Activated naive CD4-positive, alpha-beta T cell treated with anti-CD3 and anti-CD28 coated beads for 36 hours (primary cell): ENCODE measurements at regions of chr3 and their contacts with region 1.

Region 1: DNA sequence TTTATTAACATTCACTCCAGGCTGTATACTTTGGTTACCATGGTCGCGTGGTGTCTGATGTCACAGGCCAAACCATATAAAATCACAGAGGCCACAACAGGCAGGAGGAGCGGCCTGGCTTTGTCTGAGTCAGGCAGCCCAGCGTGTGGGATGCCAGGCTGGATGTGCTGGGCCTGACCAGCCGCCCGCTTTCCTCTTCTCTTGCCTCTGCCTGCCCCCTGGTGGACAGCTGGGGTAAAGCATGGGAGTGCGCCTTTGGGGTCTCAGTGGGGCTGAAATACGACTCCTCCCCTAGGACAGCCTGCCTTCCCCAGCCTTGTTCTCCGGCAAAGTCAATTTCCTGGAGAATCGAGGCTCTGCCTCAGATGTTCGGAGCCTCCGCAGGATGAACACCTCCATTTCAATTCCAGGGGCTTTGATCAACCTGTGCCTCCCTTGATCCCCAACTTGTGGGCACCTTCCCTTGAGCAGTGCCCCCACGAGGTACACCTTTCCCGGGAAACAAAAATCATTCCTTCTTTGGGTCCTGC is 78.2 kb downstream of the CCNL1 start:
- DNase-seq: peak; percentile 86
- H3K4me3 Mint-ChIP-seq: no peak overlapping the region
- H3K27ac Mint-ChIP-seq: no peak overlapping the region
- H3K4me1 Mint-ChIP-seq: peaks cover 9% of the 10 kb centered on the region
- H3K27me3 Mint-ChIP-seq: no peaks in the 10 kb centered on the region

Region 2: GRCh38 chr3:156040041-156040440 is 1041.7 kb before region 1 on chr3:
- CTCF ChIA-PET with region 1: interaction called, 3 read pairs
- intact Hi-C with region 1: loop called (anchors 5 kb)
- DNase-seq: no peak
- H3K4me3 Mint-ChIP-seq: no peak overlapping the region
- H3K27ac Mint-ChIP-seq: no peak overlapping the region
- H3K4me1 Mint-ChIP-seq: no peaks in the 10 kb centered on the region
- H3K27me3 Mint-ChIP-seq: peaks cover 6% of the 10 kb centered on the region

Region 3: GRCh38 chr3:156576651-156577343 is 504.9 kb before region 1 on chr3:
- CTCF ChIA-PET with region 1: no interaction called
- intact Hi-C with region 1: loop called (anchors 1 kb)
- DNase-seq: no peak
- H3K4me3 Mint-ChIP-seq: no peak overlapping the region
- H3K27ac Mint-ChIP-seq: no peak overlapping the region
- H3K4me1 Mint-ChIP-seq: no peaks in the 10 kb centered on the region
- H3K27me3 Mint-ChIP-seq: peaks cover 11% of the 10 kb centered on the region

Region 4: GRCh38 chr3:156899951-156900350 is 181.8 kb before region 1 on chr3:
- CTCF ChIA-PET with region 1: no interaction called
- intact Hi-C with region 1: no loop called
- DNase-seq: no peak
- H3K4me3 Mint-ChIP-seq: no peak overlapping the region
- H3K27ac Mint-ChIP-seq: no peak overlapping the region
- H3K4me1 Mint-ChIP-seq: no peaks in the 10 kb centered on the region
- H3K27me3 Mint-ChIP-seq: no peaks in the 10 kb centered on the region